ENCODE measurements at regions of chr17 and their contacts with region 1.

Region 1: GRCh38 chr17:80780381-80781198 is 211.1 kb upstream of the CHMP6 start:
- DNase-seq: peak; percentile 80
- CTCF ChIP-seq: no peak

Region 2: GRCh38 chr17:80414803-80415625 is 365.6 kb before region 1 on chr17 and contains the start of gene ENDOV:
- CTCF ChIA-PET with region 1: no interaction called
- POLR2A ChIA-PET with region 1: no interaction called
- DNase-seq: peak; percentile 100
- CTCF ChIP-seq: no peak

Region 3: GRCh38 chr17:80791758-80792284 is 11.2 kb after region 1 on chr17:
- CTCF ChIA-PET with region 1: interaction called, 13 read pairs
- POLR2A ChIA-PET with region 1: no interaction called
- DNase-seq: no peak
- CTCF ChIP-seq: no peak